OCI-LY7 (cell line): ENCODE measurements at regions of chr14 and their contacts with region 1.

Region 1: GRCh38 chr14:89040460-89041259 is 216.2 kb downstream of the TTC8 start:
- DNase-seq: peak; percentile 69
- H3K4me3 ChIP-seq: no peak overlapping the region
- H3K27ac ChIP-seq: no peak overlapping the region
- H3K4me1 ChIP-seq: no peaks in the 10 kb centered on the region
- CTCF ChIP-seq: peak; percentile 98

Region 2: GRCh38 chr14:89178802-89179535 is 138.3 kb after region 1 on chr14:
- CTCF ChIA-PET with region 1: no interaction called
- POLR2A ChIA-PET with region 1: interaction called, 3 read pairs
- intact Hi-C with region 1: loop called (anchors 5 kb)
- DNase-seq: no peak
- H3K4me3 ChIP-seq: no peak overlapping the region
- H3K27ac ChIP-seq: no peak overlapping the region
- H3K4me1 ChIP-seq: peaks cover 10% of the 10 kb centered on the region
- CTCF ChIP-seq: no peak

Region 3: GRCh38 chr14:89564286-89564957 is 523.8 kb after region 1 on chr14:
- CTCF ChIA-PET with region 1: no interaction called
- POLR2A ChIA-PET with region 1: no interaction called
- intact Hi-C with region 1: loop called (anchors 10 kb)
- DNase-seq: no peak
- H3K4me3 ChIP-seq: no peak overlapping the region
- H3K27ac ChIP-seq: no peak overlapping the region
- H3K4me1 ChIP-seq: no peaks in the 10 kb centered on the region
- CTCF ChIP-seq: no peak

Region 4: GRCh38 chr14:89767861-89768268 is 727.2 kb after region 1 on chr14:
- CTCF ChIA-PET with region 1: no interaction called
- POLR2A ChIA-PET with region 1: interaction called, 3 read pairs
- intact Hi-C with region 1: loop called (anchors 1 kb)
- DNase-seq: peak; percentile 81
- H3K4me3 ChIP-seq: no peak overlapping the region
- H3K27ac ChIP-seq: no peak overlapping the region
- H3K4me1 ChIP-seq: peaks cover 37% of the 10 kb centered on the region
- CTCF ChIP-seq: peak; percentile 94

Region 5: GRCh38 chr14:89915114-89915878 is 874.6 kb after region 1 on chr14:
- CTCF ChIA-PET with region 1: no interaction called
- POLR2A ChIA-PET with region 1: no interaction called
- intact Hi-C with region 1: loop called (anchors 1 kb)
- DNase-seq: peak; percentile 68
- H3K4me3 ChIP-seq: no peak overlapping the region
- H3K27ac ChIP-seq: no peak overlapping the region
- H3K4me1 ChIP-seq: no peaks in the 10 kb centered on the region
- CTCF ChIP-seq: peak; percentile 99